ENCODE measurements at regions of chr15 and their contacts with region 1.

Region 1: DNA sequence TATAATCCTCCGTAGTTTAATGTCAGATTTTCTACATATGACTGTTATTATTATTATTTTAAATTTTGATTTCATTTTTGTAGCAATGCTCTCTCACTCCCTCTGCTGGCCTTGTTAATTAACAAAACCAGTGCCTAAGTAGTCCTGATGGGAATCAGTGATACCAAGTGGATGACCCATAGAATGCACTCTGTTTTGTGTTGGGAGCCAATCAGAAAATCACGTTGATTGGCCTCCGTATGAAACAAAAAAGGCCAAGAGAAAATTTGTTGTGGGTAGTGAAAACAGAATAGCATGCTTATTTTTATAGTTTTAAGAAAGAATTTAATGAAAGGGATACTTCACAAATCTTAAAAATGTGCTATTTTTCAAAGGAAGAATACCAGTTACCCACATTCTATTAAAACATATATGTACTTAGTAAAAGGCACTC is 34.4 kb upstream of the MEIS2 start:
- DNase-seq: no peak
- H3K4me3 ChIP-seq: no peak overlapping the region
- CTCF ChIP-seq: peak; percentile 37

Region 2: DNA sequence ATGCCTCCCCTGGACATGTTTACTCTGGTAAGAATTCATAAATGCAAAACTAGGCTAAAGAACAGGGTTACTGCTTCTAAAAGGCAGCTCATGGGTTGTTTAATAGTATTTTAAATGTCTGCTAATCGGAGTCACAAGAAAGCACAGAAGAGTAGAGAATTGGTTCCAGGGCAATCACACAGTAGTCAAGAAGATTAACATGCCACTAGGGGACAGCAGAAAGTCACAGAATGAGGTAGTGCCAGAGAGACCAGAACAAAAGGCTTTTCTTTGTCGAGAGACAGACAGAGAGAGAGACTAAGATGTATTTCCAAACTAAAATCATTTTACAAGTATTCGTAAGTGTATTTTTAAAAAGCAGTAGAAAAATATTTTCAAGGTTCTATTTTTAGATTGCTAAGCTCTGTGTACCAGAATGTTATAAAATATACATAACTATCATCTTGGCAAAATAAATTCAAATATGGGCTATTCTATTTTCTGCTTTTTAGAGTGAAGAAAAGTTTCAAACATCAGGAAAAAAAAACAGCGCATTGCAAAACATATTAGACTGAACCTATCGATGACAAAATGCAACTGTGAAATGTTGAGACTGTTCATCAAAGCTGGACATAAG is 633.5 kb before region 1 on chr15:
- CTCF ChIA-PET with region 1: interaction called, 30 read pairs
- POLR2A ChIA-PET with region 1: no interaction called
- DNase-seq: peak; percentile 12
- H3K4me3 ChIP-seq: no peak overlapping the region
- CTCF ChIP-seq: peak; percentile 59

Region 3: DNA sequence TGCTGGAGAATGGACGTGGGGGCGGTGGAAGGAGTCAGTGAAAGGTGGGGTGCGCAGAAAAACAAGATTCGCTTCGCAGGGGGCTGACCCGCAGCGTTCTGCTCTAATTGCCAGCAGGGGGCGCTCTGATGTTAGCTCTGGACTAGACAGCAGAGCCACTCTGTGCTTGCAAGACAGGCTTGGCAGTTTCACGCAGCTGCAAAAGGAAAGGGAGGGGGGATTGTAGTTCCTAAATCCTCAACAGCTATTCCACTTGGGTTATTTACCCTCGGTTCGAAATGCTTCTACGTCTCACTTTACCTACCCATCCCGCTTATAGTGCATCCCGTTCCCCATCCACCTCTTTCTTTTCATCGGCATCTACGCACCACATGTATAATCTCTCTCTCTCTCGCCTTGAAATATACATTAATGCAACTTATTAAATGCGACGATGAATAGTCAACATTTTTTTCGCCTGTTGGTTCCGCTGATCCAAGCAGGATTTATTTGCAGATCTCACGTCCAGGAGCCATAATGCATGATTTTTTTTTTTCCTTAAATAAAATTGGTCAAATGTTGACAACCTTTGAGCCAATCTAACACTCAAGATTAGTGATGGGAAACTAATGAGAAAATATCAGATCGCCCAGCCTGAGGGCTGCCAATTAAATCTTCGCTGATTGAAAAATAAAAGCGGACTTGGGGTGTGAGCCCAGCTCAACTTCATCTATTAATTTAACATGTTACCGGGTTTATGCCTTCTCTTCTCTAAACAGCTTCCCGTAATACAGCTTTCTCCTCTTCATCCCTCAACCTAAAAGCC is 250.8 kb before region 1 on chr15:
- CTCF ChIA-PET with region 1: interaction called, 39 read pairs
- POLR2A ChIA-PET with region 1: no interaction called
- DNase-seq: peak; percentile 42
- H3K4me3 ChIP-seq: peak overlapping the region; percentile 44
- CTCF ChIP-seq: peak; percentile 90

Region 4: DNA sequence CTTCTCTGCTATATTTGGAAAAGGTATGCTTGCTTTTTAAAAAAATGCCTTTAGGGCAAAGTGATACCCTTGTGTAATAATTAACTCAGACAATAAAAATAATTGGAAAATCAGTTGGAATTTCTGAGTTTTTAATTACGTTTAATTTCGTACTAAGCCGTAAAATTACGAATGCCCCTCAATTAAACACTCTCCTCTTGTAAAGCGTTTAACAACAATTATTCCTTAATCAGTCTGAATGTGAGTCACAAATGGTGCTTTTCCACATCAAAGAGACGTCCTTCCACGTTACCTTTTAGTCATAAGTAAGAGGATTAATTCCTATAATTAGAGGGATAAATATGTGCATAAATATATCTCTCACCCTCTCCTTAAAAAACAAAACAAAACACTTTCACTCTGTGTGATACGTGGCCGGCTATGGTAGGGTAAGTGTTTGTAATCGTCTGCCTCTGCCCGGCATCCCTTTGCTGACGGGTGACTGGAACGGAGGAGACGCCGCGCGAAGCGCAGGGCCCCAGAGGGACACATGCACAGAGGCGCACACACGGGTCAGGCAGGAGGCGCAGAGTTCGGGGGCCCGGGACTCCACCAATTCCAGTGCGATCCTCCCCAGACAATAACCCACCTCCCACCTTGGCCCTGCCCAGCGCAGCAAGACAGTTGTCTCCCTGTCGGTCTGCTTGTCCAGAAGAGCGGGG is 24.7 kb before region 1 on chr15:
- CTCF ChIA-PET with region 1: interaction called, 11 read pairs
- POLR2A ChIA-PET with region 1: no interaction called
- DNase-seq: no peak
- H3K4me3 ChIP-seq: peak overlapping the region; percentile 57
- CTCF ChIP-seq: no peak

Region 5: GRCh38 chr15:37891766-37892368 is 757.2 kb after region 1 on chr15:
- CTCF ChIA-PET with region 1: interaction called, 32 read pairs
- POLR2A ChIA-PET with region 1: no interaction called
- DNase-seq: no peak
- H3K4me3 ChIP-seq: no peak overlapping the region
- CTCF ChIP-seq: peak; percentile 81